ENCODE measurements at regions of chr6 and their contacts with region 1.

Region 1: GRCh38 chr6:155174576-155175211 is 89.1 kb upstream of the CLDN20 start:
- DNase-seq: peak; percentile 65
- ATAC-seq: peak; percentile 86

Region 2: GRCh38 chr6:154675602-154676088 is 499.0 kb before region 1 on chr6:
- intact Hi-C with region 1: loop called (anchors 10 kb)
- DNase-seq: peak; percentile 92
- ATAC-seq: peak; percentile 97

Region 3: DNA sequence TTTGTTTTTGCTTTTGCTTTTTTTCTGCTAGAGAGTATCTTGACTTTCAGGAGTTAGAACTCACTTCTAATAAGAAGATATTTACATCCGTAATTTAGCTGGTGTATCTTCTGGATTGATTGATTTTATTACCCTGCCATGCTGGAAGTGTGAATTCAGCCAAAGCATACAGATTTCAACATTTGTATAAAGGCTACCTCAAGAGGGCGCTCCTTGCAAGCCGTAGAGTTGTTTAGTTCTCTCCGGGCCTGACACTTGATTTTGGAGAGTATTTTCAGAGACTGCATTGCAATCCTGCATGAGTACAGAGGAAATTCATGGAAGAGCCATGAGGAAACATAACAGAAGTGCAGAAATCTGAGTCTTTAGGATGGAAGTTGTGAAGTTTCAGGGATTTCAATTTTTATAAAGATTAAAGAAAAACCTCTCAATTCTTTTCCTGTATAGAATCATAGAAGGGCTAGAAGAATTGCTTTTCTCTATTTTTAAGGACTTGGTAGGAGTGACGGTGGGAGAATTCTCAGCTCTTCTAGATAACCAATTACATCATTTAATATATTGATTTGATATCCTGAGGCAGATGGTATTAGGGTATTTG is 246.3 kb before region 1 on chr6:
- intact Hi-C with region 1: loop called (anchors 10 kb)
- DNase-seq: peak; percentile 69
- ATAC-seq: peak; percentile 67

Region 4: GRCh38 chr6:154951345-154952200 is 223.1 kb before region 1 on chr6:
- intact Hi-C with region 1: no loop called
- DNase-seq: no peak
- ATAC-seq: no peak

Measured in sciatic nerve (tissue), 2 donors.